ENCODE measurements at regions of chr16 and their contacts with region 1.

Region 1: DNA sequence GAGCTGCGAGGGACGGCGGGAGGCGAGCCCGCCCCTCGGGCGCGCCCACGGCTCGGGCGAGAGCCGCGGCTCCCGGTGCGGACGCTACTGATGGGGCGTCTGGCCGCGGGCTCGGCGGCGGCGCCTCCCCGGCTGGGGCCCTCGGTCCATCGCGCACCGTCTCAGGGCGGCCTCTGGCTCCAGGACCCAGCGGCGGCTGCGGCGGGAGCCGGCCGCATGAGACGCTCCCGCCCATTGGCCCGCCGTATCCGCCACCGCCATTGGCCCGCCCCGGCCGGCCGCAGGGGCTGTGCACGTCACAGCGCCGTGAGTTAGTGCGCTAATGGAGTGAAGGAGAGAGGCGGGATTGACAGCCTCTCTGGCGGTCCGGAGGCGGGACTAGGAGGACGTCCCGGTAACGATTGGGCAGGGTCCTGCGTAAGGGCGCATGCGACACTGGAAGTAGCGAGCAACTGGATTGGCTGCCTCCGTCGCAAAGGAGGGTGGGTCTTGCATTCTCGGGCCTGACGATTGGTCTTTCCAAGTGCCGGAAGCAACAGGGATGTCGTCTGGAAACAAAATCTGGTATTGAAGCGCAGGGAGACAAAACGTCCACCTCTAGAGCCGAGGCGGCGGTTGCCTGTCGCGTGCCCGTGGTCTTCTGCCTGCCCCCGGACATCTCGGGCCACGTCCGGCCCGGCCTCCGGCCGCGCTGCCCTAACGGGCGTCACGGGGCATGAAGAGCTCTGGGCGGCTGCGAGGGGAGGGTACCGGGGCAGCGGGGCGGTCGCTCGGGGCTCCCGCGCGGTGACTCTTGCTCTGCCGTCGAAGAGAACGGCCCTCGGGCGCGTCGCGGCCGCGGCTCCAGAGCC is at the start of gene ANKRD11:
- DNase-seq: peak; percentile 99
- ATAC-seq: peak; percentile 94
- H3K4me3 Mint-ChIP-seq: peak within 1 kb of the TSS; percentile 96
- H3K27ac Mint-ChIP-seq: peak within 1 kb of the TSS; percentile 96
- H3K4me1 Mint-ChIP-seq: peaks cover 46% of the 10 kb centered on the region
- H3K27me3 Mint-ChIP-seq: no peaks in the 10 kb centered on the region
- CTCF ChIP-seq: no peak
- total RNA-seq, gene ANKRD11: 145 to 147 TPM

Region 2: DNA sequence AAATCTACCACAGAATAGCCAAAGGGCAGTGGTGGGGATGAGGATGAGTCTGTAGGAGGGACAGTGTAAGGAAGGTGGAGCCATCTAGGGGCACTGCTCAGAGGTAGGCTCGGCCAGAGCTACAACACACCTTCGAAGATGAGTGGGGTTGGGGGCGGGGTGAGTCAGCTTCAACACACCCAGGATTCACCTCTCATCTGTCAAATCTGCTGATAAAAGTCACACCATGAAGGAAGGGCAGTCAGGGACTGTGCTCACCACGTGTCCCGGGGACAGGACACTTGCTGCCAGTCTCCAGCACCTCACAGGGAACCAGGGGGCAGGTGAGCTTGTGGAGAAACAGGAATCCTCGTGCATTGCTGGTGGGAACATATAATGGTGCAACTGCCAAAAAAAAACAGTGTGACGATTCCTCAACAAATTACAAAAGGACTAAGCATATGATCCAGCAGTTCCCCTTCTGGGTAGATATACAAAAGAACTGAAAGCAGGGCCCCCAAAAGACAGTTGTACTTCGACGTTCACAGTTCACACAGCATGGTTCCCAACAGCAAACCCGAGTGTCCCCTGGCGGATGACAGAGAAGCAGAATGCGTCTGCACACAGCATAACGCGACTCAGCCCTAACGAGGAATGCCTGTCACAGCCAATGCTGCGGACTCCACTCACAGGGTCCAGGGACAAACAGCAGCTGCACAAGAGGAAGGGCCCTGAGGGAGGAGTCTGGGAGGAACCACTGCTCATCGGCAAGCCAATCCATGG is 133.4 kb before region 1 on chr16:
- CTCF ChIA-PET with region 1: no interaction called
- POLR2A ChIA-PET with region 1: interaction called, 4 read pairs
- intact Hi-C with region 1: loop called (anchors 10 kb)
- DNase-seq: peak; percentile 90
- ATAC-seq: peak; percentile 58
- H3K4me3 Mint-ChIP-seq: peak overlapping the region; percentile 17
- H3K27ac Mint-ChIP-seq: peak overlapping the region; percentile 35
- H3K4me1 Mint-ChIP-seq: peaks cover 89% of the 10 kb centered on the region
- H3K27me3 Mint-ChIP-seq: no peaks in the 10 kb centered on the region
- CTCF ChIP-seq: no peak

Region 3: GRCh38 chr16:89476804-89477261 is 13.8 kb before region 1 on chr16:
- CTCF ChIA-PET with region 1: no interaction called
- POLR2A ChIA-PET with region 1: interaction called, 31 read pairs
- intact Hi-C with region 1: no loop called
- DNase-seq: no peak
- ATAC-seq: peak; percentile 62
- H3K4me3 Mint-ChIP-seq: peak overlapping the region; percentile 1
- H3K27ac Mint-ChIP-seq: peak overlapping the region; percentile 41
- H3K4me1 Mint-ChIP-seq: peaks cover 90% of the 10 kb centered on the region
- H3K27me3 Mint-ChIP-seq: no peaks in the 10 kb centered on the region
- CTCF ChIP-seq: no peak

Region 4: GRCh38 chr16:89507834-89508590 is 17.4 kb after region 1 on chr16 and contains the start of gene SPG7:
- CTCF ChIA-PET with region 1: interaction called, 7 read pairs
- POLR2A ChIA-PET with region 1: interaction called, 39 read pairs
- intact Hi-C with region 1: no loop called
- DNase-seq: peak; percentile 89
- ATAC-seq: peak; percentile 75
- H3K4me3 Mint-ChIP-seq: peak within 1 kb of the TSS; percentile 85
- H3K27ac Mint-ChIP-seq: peak within 1 kb of the TSS; percentile 90
- H3K4me1 Mint-ChIP-seq: peaks cover 34% of the 10 kb centered on the region
- H3K27me3 Mint-ChIP-seq: no peaks in the 10 kb centered on the region
- CTCF ChIP-seq: no peak
- total RNA-seq, gene SPG7: 78.6 to 79.8 TPM